ENCODE measurements at regions of chr3 and their contacts with region 1.

Region 1: GRCh38 chr3:123524981-123525380 is 59.9 kb downstream of the HACD2 start:
- DNase-seq: no peak
- H3K4me3 Mint-ChIP-seq: no peak overlapping the region
- H3K27ac Mint-ChIP-seq: no peak overlapping the region
- H3K4me1 Mint-ChIP-seq: peaks cover 53% of the 10 kb centered on the region
- H3K27me3 Mint-ChIP-seq: no peaks in the 10 kb centered on the region

Region 2: GRCh38 chr3:123499322-123499721 is 25.7 kb before region 1 on chr3:
- CTCF ChIA-PET with region 1: no interaction called
- intact Hi-C with region 1: no loop called
- DNase-seq: no peak
- H3K4me3 Mint-ChIP-seq: no peak overlapping the region
- H3K27ac Mint-ChIP-seq: no peak overlapping the region
- H3K4me1 Mint-ChIP-seq: no peaks in the 10 kb centered on the region
- H3K27me3 Mint-ChIP-seq: no peaks in the 10 kb centered on the region

Region 3: GRCh38 chr3:123535580-123535979 is 10.6 kb after region 1 on chr3:
- CTCF ChIA-PET with region 1: no interaction called
- intact Hi-C with region 1: loop called (anchors 2 kb)
- DNase-seq: no peak
- H3K4me3 Mint-ChIP-seq: no peak overlapping the region
- H3K27ac Mint-ChIP-seq: no peak overlapping the region
- H3K4me1 Mint-ChIP-seq: peaks cover 19% of the 10 kb centered on the region
- H3K27me3 Mint-ChIP-seq: no peaks in the 10 kb centered on the region

Region 4: GRCh38 chr3:123552095-123552714 is 27.2 kb after region 1 on chr3:
- CTCF ChIA-PET with region 1: no interaction called
- intact Hi-C with region 1: loop called (anchors 1 kb)
- DNase-seq: no peak
- H3K4me3 Mint-ChIP-seq: no peak overlapping the region
- H3K27ac Mint-ChIP-seq: no peak overlapping the region
- H3K4me1 Mint-ChIP-seq: peaks cover 4% of the 10 kb centered on the region
- H3K27me3 Mint-ChIP-seq: no peaks in the 10 kb centered on the region

Region 5: GRCh38 chr3:123620343-123620742 is 95.4 kb after region 1 on chr3:
- CTCF ChIA-PET with region 1: no interaction called
- intact Hi-C with region 1: no loop called
- DNase-seq: no peak
- H3K4me3 Mint-ChIP-seq: no peak overlapping the region
- H3K27ac Mint-ChIP-seq: no peak overlapping the region
- H3K4me1 Mint-ChIP-seq: no peaks in the 10 kb centered on the region
- H3K27me3 Mint-ChIP-seq: no peaks in the 10 kb centered on the region